ENCODE measurements at regions of chr5 and their contacts with region 1.

Region 1: DNA sequence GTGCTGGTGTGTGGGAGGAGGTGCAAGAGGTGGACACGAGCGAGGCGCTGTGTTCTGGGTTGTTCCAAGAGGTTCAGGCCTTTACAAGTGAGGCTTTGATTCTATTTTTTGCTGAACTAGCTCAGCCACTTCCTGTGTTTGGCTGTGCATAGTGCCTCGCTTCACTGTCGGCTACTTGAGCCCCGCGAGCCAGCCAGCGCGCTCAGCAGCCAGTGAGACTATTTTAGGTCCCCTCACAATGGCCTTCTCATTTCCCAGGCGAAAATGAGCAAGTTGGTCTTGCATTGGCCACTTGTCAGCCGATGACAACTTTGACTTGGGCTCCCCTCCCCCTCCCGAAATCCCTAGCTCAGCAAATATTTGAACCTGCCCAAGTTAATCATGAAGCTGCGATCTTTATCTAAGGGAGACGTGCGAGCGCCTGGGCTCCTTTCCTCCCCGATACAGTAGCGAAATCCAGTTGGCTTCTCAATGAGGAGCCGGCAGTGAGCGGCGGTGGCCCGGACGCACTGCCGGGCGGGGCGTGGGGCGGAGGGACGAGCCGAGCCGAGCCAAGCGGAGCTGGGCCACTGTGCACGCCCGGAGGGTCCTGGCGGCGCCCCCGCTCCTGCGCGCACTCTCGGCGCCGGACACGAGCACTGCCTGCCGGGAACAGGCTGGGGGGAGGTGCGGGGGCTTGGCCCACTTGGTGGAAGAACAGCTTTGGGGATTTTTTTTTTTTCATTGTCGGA is 72.6 kb downstream of the PIK3R1 start:
- ATAC-seq: peak; percentile 87 to 93 (median 90)
- H3K4me3 ChIP-seq: peak overlapping the region; percentile 42 to 56 (median 46)
- H3K27ac ChIP-seq: peak overlapping the region; percentile 70 to 89
- H3K4me1 ChIP-seq: peaks cover 11 to 18% of the 10 kb centered on the region in 2 donors

Region 2: GRCh38 chr5:68088302-68088701 is 199.8 kb before region 1 on chr5:
- in situ Hi-C with region 1: no loop called
- ATAC-seq: peak in 2 of 8 experiments; percentile 52 to 61
- H3K4me3 ChIP-seq: no peak overlapping the region
- H3K27ac ChIP-seq: no peak overlapping the region
- H3K4me1 ChIP-seq: peaks cover 0 to 7% of the 10 kb centered on the region in 2 donors

Region 3: DNA sequence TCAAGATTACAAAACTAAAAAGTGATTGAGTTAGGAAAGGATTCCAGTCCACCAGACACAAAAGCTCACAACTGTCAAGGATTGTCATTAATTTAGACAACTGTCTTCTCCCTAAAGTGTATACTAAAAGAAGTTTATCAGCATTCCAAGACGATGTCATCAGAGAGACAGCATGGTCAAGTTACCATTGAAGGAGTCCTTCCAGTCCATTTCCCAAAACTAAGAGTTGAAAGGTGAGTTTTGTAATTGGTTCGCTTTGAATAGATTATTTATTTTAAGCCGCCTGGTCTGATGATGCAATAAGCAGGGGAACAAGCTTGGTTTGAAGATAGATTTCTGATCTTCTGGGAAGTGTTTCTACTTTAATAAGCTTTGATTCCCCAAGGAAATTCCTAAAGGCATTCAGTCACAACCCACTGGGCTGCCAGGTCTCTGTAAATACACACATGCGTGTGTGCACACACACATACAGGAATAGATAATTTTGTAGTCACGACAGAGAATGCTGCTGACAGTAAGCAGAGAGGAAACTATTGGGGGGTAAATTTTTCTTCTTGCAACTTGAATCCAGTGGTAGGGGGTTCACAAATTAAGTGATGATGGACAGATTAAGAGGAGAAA is 162.2 kb after region 1 on chr5:
- in situ Hi-C with region 1: loop called in 2 of 9 experiments (anchors 5 to 25 kb)
- ATAC-seq: no peak
- H3K4me3 ChIP-seq: no peak overlapping the region
- H3K27ac ChIP-seq: no peak overlapping the region
- H3K4me1 ChIP-seq: peaks cover 4 to 7% of the 10 kb centered on the region in 2 donors

Region 4: DNA sequence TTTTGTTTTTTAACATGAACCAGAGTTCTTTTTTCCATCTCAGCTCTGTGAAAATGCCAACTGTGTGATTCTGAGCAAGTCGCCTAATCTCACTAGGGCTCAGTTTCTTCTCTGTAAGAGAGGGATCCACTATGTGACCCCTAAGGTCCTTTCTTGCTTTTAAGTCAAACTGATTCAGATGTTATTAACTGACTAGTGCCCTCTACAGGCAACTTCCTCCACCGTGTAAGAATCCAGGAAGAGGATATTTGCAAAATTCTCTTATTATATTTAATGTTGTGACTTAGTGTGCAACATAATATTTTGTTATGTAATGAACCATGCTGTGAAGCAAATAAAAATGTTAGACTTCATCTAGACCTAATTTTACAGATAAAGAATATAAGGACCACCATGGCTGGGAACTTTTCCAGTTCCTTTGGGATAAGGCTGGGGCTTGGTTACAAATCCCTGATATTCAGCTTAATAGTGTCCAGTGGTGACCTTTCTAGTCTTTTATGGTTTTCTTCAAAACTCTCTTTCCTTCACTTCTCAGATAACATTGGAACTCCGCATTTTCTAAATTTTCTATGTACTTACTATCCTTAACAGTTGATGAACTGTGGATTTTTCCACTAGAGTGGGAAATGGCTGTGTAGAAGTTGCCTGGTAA is 172.1 kb after region 1 on chr5:
- in situ Hi-C with region 1: loop called in 1 of 9 experiments (anchors 25 kb)
- ATAC-seq: peak in 3 of 8 experiments; percentile 37 to 64 (median 60)
- H3K4me3 ChIP-seq: no peak overlapping the region
- H3K27ac ChIP-seq: no peak overlapping the region
- H3K4me1 ChIP-seq: peaks cover 0 to 4% of the 10 kb centered on the region in 2 donors

Region 5: DNA sequence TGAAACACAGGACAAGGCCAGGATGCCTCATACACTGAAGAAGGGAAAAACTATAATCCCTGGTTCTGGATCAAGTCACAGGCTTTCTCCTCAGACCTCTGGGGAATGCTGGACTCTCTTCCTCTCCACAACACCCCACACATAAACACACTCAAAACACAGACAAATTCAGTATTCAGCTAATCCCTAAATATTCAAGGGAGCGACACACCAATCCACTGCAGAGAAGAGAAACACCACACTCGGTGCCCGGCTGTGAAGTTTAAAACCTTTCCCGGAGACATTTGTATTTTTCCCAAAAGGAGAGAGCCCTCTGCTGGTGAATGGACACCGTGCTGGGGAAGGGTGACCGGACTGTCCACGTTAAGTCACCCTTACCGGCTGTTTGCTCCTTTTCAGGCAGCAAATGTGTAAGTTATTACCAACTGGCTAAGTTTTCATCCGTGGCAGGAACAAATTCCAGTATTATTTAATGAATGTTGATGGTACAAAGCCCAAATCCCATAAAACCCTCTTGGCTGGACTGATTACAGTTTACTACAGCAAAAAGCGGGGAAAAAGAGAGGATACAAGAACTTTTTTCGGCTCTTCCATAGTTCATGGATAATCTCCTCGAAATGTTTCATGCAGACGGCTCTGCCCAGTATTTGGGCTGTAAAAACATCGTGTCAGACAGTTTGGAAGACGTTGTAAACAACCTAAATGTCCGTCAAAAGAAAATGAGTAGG is 674.8 kb after region 1 on chr5:
- in situ Hi-C with region 1: loop called in 1 of 9 experiments (anchors 25 kb)
- ATAC-seq: peak; percentile 92 to 99 (median 98)
- H3K4me3 ChIP-seq: no peak overlapping the region
- H3K27ac ChIP-seq: no peak overlapping the region
- H3K4me1 ChIP-seq: peaks cover 0 to 4% of the 10 kb centered on the region in 2 donors

Region 6: DNA sequence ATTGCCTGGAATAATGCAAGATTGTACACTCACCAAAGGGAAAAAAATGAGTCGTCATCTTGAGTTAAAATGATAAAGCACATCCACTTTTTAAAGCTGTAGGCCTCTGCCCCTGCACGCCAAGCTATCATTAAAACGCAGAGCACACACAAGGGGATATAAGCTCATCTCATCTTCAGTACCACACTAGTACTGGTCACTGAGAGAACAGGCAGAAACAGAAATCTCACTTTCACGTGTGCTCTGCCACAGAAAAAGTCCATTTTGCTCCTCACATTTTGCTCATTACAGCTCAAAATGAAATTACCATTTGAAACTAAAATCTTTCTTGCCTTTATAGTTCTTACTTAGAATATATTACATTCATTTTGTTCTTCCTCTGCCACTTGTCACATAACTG is 706.5 kb after region 1 on chr5:
- in situ Hi-C with region 1: loop called in 2 of 9 experiments (anchors 25 kb)
- ATAC-seq: peak in 5 of 8 experiments; percentile 60 to 76 (median 67)
- H3K4me3 ChIP-seq: no peak overlapping the region
- H3K27ac ChIP-seq: no peak overlapping the region
- H3K4me1 ChIP-seq: no peaks in the 10 kb centered on the region

Region 7: DNA sequence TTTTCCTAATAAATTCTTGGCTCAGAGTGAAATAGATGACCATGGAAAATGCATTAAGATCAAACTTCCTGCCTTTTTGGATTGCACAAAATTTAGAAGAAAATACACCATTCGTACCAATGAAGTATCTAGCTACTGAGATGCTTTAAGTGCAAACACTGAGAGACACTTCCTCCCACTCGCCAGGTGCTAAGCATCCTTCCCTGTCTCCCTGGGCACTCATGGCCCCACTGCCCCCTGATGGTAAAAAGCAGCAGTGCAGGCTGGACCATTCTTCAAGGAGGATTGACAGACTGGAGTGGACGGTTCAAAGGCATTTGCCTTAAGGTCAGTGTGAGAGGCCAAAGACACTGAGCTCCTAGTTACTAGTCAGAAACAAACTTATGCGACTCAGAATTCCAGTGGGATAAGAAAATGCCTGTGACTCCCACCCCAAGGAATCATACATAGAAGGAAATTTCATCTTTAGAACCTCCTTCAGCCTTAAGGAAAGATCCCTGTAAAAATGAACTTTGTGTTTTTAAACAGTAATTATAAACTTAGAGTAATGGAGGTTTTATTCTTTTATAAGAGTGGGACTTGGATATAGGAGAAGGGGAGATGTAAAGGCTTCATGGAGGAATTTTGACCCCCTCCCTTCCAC is 719.7 kb after region 1 on chr5:
- in situ Hi-C with region 1: loop called in 4 of 9 experiments (anchors 25 kb)
- ATAC-seq: peak; percentile 70 to 88 (median 80)
- H3K4me3 ChIP-seq: no peak overlapping the region
- H3K27ac ChIP-seq: peak overlapping the region in 1 of 2 donors; percentile 12
- H3K4me1 ChIP-seq: peaks cover 0 to 17% of the 10 kb centered on the region in 2 donors

Measured in motor neuron (in vitro differentiated cells).